ENCODE measurements at regions of chr4 and their contacts with region 1.

Region 1: DNA sequence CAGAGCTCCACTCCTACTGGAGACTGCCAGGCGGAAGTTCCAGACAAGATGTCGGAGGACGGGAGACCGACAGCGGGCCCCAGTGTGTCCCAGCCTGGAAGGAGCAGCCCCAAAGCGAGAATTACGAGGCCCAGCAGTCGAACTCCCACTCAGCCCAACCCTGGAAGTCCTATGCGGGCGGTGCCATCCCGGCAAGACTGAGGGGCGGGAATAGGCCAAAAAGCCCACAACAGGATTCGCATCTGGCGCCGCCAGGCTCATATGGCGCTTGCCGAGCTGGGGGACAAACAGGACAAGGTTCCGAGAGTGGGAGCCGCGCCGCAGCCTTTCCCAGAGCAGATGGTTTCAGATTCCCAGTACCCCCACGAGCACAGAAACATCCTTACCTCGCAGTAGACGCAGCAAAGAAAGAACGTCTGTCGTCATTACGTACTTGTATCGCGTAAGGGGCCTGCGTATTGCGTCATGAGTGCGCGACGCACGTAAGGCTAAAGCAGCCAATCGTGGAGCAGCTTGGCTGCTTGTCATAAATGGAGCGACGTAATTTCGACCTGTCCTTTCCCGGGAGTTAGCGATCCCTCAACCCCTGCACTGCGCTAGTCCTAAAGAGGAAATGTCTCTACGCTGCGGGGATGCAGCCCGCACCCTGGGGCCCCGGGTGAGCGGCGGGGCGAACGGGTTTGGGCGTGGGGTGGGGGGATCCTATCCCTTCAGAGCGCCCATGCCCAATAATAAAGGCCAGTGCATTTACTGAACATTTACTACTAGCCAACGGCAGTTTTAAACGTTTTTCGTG is at the starts of genes LIAS and RPL9:
- ATAC-seq: peak; percentile 85 to 98 (median 96)
- H3K4me3 ChIP-seq: peak within 1 kb of the TSS; percentile 72 to 98 (median 79)
- H3K27ac ChIP-seq: peak within 1 kb of the TSS; percentile 77 to 91
- H3K4me1 ChIP-seq: peaks cover 14 to 15% of the 10 kb centered on the region in 2 donors
- total RNA-seq, gene LIAS: 15.1 to 35.0 (median 21.6) TPM
- total RNA-seq, gene RPL9: 1,536 to 3,891 (median 1,936) TPM

Region 2: DNA sequence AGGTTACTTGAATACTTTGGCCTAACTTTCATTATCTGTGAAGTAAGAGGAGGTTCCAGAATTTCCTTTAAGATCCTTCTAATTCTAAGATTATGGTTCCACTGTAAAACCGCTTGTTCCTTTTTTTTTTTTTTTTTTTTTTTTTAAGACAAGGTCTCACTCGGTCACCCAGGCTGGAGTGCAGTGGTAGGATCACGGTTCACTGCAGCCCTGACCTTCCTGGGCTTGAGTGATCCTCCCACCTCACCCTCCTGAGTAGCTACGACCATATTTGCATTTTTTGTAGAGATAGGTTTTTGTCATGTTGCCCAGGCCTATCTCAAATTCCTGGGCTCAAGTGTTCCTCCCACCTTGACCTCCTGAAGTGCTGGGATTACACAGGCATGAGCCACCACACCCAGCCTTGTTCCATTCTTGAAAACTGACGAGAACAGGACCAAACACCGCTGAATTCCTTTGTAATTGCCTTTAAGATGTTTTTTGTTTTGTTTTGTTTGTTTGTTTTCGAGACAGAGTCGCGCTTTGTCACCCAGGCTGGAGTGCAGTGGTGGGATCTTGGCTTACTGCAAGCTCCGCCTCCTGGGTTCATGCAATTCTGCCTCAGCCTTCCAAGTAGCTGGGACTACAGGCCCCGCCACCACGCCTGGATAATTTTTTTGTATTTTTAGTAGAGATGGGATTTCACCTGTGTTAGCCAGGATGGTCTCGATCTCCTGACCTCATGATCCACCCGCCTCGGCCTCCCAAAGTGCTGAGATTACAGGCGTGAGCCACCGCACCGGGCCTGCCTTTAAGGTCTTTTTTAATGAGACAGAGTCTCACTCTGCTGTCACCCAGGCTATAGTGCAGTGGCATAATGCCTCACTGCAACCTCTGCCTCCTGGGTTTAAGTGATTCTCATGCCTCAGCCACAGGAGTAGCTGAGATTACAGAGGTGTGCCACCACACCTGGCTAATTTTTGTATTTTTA is 512.3 kb after region 1 on chr4:
- in situ Hi-C with region 1: loop called in 2 of 9 experiments (anchors 25 kb)
- ATAC-seq: peak in 2 of 8 experiments; percentile 18 to 30
- H3K4me3 ChIP-seq: no peak overlapping the region
- H3K27ac ChIP-seq: no peak overlapping the region
- H3K4me1 ChIP-seq: peaks cover 0 to 6% of the 10 kb centered on the region in 2 donors